Tibial artery (tissue), 4 donors: ENCODE measurements at regions of chr17 and their contacts with region 1.

Region 1: GRCh38 chr17:35764123-35764991 is 3.7 kb downstream of the C17orf50 start:
- DNase-seq: peak; percentile 75 to 92
- H3K4me3 ChIP-seq: peak overlapping the region; percentile 46 to 61
- H3K27ac ChIP-seq: peak overlapping the region; percentile 8 to 60
- H3K4me1 ChIP-seq: peaks cover 0 to 22% (median 13%) of the 10 kb centered on the region in 4 donors
- H3K27me3 ChIP-seq: no peaks in the 10 kb centered on the region
- CTCF ChIP-seq: peak; percentile 97 to 99

Region 2: GRCh38 chr17:35679007-35679682 is 85.2 kb before region 1 on chr17:
- intact Hi-C with region 1: no loop called
- DNase-seq: no peak
- H3K4me3 ChIP-seq: no peak overlapping the region
- H3K27ac ChIP-seq: no peak overlapping the region
- H3K4me1 ChIP-seq: no peaks in the 10 kb centered on the region
- H3K27me3 ChIP-seq: no peaks in the 10 kb centered on the region
- CTCF ChIP-seq: no peak

Region 3: GRCh38 chr17:35804658-35805192 is 40.4 kb after region 1 on chr17:
- intact Hi-C with region 1: loop called (anchors 1 kb)
- DNase-seq: no peak
- H3K4me3 ChIP-seq: no peak overlapping the region
- H3K27ac ChIP-seq: peak overlapping the region in 1 of 2 donors; percentile 66
- H3K4me1 ChIP-seq: peaks cover 0 to 56% (median 29%) of the 10 kb centered on the region in 4 donors
- H3K27me3 ChIP-seq: no peaks in the 10 kb centered on the region
- CTCF ChIP-seq: peak; percentile 89 to 99